ENCODE measurements at regions of chr1 and their contacts with region 1.

Region 1: GRCh38 chr1:156860113-156860627 is 495 bp upstream of the NTRK1 start:
- DNase-seq: peak; percentile 87
- H3K4me3 ChIP-seq: peak overlapping the region; percentile 54 to 64
- H3K27ac ChIP-seq: peak overlapping the region in 1 of 2 experiments; percentile 97; a peak in 2 of 4 replicates
- H3K4me1 ChIP-seq: peaks cover 3 to 74% of the 10 kb centered on the region in 2 experiments; a peak in 2 of 4 replicates
- H3K27me3 ChIP-seq: peaks cover 39% of the 10 kb centered on the region
- CTCF ChIP-seq: peak; percentile 85
- EP300 ChIP-seq: no peak
- RAD21 ChIP-seq: peak; percentile 86

Region 2: DNA sequence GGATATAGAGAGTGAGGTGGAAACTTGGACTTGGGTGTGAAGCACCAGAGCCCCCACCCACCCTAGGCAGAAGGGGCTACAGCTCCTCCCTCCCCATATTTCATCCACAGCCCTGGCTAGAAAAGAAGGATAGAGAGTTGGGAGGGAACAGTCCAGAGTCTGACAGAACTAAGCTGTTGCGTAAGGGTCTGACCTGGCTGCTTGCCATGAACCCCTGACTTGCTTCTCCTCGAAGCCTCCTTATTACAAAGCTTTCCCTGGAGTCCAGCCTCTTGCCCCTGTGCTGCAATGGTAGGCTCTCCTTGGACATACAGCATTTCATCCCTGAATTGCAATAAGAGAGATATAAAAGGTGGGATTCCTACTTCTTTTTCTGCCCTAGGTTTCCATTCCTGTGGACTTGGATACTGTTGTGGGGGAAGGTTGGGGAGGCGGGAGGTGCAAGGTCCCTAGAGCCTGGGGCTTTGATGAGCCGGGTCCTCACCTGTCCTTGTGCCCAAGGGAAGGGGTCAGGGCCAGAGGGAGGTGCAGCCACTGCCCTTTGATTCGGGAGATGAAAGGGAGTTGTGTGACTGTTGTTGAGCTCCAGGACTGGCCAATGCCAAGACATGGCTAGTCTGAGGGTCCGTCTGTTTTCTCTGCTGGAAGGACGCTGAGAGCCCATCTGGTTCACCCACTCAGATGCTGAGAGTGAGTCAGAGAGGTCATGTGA is 488.5 kb before region 1 on chr1:
- CTCF ChIA-PET with region 1: no interaction called
- POLR2A ChIA-PET with region 1: no interaction called
- DNase-seq: no peak
- H3K4me3 ChIP-seq: no peak overlapping the region
- H3K27ac ChIP-seq: no peak overlapping the region
- H3K4me1 ChIP-seq: peaks cover 0 to 17% of the 10 kb centered on the region in 2 experiments; a peak in 1 of 4 replicates
- H3K27me3 ChIP-seq: no peaks in the 10 kb centered on the region
- CTCF ChIP-seq: no peak
- EP300 ChIP-seq: no peak
- RAD21 ChIP-seq: no peak

Region 3: DNA sequence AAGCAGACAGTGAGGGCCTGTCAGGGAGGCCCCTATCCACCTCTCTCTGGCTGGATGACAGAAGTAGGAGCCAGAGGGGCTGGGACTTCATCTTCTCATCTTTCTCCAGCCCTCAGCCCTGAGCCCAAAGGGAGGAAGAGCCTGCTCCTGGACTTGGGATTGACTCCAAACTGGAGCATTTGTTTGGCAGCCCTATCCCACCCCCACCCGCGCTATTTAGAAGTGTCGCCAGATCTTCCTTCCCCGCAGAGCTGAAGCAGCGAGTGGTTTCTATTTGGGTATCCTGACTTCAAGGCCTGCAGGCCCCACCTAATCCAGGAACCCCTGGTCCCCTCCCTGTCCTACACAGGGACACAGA is 192.6 kb before region 1 on chr1:
- CTCF ChIA-PET with region 1: no interaction called
- POLR2A ChIA-PET with region 1: no interaction called
- DNase-seq: no peak
- H3K4me3 ChIP-seq: no peak overlapping the region
- H3K27ac ChIP-seq: peak overlapping the region; percentile 11 to 75; a peak in 2 of 4 replicates
- H3K4me1 ChIP-seq: peaks cover 19 to 44% of the 10 kb centered on the region in 2 experiments; a peak in 3 of 4 replicates
- H3K27me3 ChIP-seq: no peaks in the 10 kb centered on the region
- CTCF ChIP-seq: no peak
- EP300 ChIP-seq: no peak
- RAD21 ChIP-seq: no peak

Region 4: GRCh38 chr1:156677616-156678596 is 182.3 kb before region 1 on chr1:
- CTCF ChIA-PET with region 1: interaction called, 16 read pairs
- POLR2A ChIA-PET with region 1: interaction called, 3 read pairs
- DNase-seq: peak; percentile 78
- H3K4me3 ChIP-seq: peak overlapping the region; percentile 55 to 71
- H3K27ac ChIP-seq: peak overlapping the region; percentile 40 to 67; a peak in 3 of 4 replicates
- H3K4me1 ChIP-seq: peaks cover 21 to 42% of the 10 kb centered on the region in 2 experiments; a peak in 3 of 4 replicates
- H3K27me3 ChIP-seq: no peaks in the 10 kb centered on the region
- CTCF ChIP-seq: peak; percentile 97
- EP300 ChIP-seq: no peak
- RAD21 ChIP-seq: peak; percentile 98

Region 5: GRCh38 chr1:156740679-156741612 is 119.2 kb before region 1 on chr1 and contains the start of gene MRPL24:
- CTCF ChIA-PET with region 1: interaction called, 11 read pairs
- POLR2A ChIA-PET with region 1: interaction called, 15 read pairs
- DNase-seq: peak; percentile 91
- H3K4me3 ChIP-seq: peak within 1 kb of the TSS; percentile 83 to 94
- H3K27ac ChIP-seq: peak within 1 kb of the TSS; percentile 82 to 92
- H3K4me1 ChIP-seq: peaks cover 9 to 13% of the 10 kb centered on the region in 2 experiments
- H3K27me3 ChIP-seq: no peaks in the 10 kb centered on the region
- CTCF ChIP-seq: no peak
- EP300 ChIP-seq: peak in 1 of 2 experiments; percentile 31; a peak in 2 of 4 replicates
- RAD21 ChIP-seq: no peak; the same call in 1 of the 2 replicates
- polyA plus RNA-seq, gene MRPL24: 149 and 171 TPM in 2 replicates

Region 6: GRCh38 chr1:156773607-156774006 is 86.6 kb before region 1 on chr1:
- CTCF ChIA-PET with region 1: interaction called, 64 read pairs
- POLR2A ChIA-PET with region 1: interaction called, 8 read pairs
- DNase-seq: no peak
- H3K4me3 ChIP-seq: no peak overlapping the region
- H3K27ac ChIP-seq: peak overlapping the region; percentile 29 to 93; a peak in 3 of 4 replicates
- H3K4me1 ChIP-seq: peaks cover 27 to 41% of the 10 kb centered on the region in 2 experiments; a peak in 3 of 4 replicates
- H3K27me3 ChIP-seq: no peaks in the 10 kb centered on the region
- CTCF ChIP-seq: peak; percentile 18; the same call in 1 of the 2 replicates
- EP300 ChIP-seq: no peak
- RAD21 ChIP-seq: no peak

Region 7: GRCh38 chr1:156813750-156814570 is 46.2 kb before region 1 on chr1:
- CTCF ChIA-PET with region 1: interaction called, 566 read pairs
- POLR2A ChIA-PET with region 1: interaction called, 3 read pairs
- DNase-seq: no peak
- H3K4me3 ChIP-seq: no peak overlapping the region
- H3K27ac ChIP-seq: no peak overlapping the region
- H3K4me1 ChIP-seq: peaks cover 15 to 26% of the 10 kb centered on the region in 2 experiments
- H3K27me3 ChIP-seq: no peaks in the 10 kb centered on the region
- CTCF ChIP-seq: no peak
- EP300 ChIP-seq: no peak
- RAD21 ChIP-seq: no peak

Region 8: GRCh38 chr1:156885314-156885713 is 25.1 kb after region 1 on chr1:
- CTCF ChIA-PET with region 1: interaction called, 455 read pairs
- POLR2A ChIA-PET with region 1: interaction called, 27 read pairs
- DNase-seq: no peak
- H3K4me3 ChIP-seq: no peak overlapping the region
- H3K27ac ChIP-seq: no peak overlapping the region
- H3K4me1 ChIP-seq: peaks cover 0 to 56% of the 10 kb centered on the region in 2 experiments; a peak in 1 of 4 replicates
- H3K27me3 ChIP-seq: no peaks in the 10 kb centered on the region; the same call in 1 of the 2 replicates
- CTCF ChIP-seq: no peak
- EP300 ChIP-seq: no peak
- RAD21 ChIP-seq: no peak

Region 9: DNA sequence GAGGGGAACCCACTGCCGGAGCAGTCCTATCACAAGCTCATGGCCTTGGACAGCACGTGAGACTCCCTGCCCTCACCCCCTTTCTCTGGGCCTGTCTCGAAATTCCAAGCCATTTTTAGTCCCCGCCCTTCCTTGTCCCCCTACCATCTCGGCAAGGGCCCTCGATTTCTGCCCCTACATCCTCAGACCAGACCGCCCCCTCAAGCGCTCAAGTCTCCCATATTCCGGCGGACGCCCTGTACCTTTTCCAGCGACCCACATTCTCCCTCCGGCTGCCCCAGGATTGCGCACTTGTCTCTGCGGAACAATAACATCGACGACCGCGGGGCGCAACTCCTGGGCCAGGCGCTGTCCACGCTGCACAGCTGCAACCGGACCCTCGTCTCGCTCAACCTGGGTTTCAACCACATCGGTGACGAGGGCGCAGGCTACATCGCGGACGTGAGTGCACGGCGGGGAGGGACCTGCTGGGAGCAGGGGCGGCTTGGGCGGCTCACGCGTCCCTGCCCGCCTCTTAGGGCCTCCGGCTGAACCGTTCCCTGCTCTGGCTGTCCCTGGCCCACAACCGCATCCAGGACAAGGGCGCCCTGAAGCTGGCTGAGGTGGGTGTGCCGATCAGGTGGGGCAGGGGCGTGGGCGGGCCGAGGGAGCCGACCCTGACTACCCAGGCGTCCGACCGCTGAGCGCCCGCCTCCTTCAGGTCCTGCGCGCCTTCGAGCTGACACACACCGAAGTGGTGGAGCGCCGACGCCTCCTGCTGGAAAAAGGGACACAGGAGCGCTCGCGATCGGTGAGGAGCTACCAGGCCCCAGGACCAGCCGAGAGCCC is 67.3 kb after region 1 on chr1:
- CTCF ChIA-PET with region 1: interaction called, 83 read pairs
- POLR2A ChIA-PET with region 1: interaction called, 3 read pairs
- DNase-seq: peak; percentile 91
- H3K4me3 ChIP-seq: peak overlapping the region; percentile 37 to 44; a peak in 3 of 4 replicates
- H3K27ac ChIP-seq: peak overlapping the region in 1 of 2 experiments; percentile 6; a peak in 1 of 4 replicates
- H3K4me1 ChIP-seq: peaks cover 5 to 25% of the 10 kb centered on the region in 2 experiments; a peak in 2 of 4 replicates
- H3K27me3 ChIP-seq: no peaks in the 10 kb centered on the region
- CTCF ChIP-seq: peak; percentile 84
- EP300 ChIP-seq: no peak
- RAD21 ChIP-seq: peak; percentile 94